Mammary epithelial cell (primary cell): ENCODE measurements at regions of chr4 and their contacts with region 1.

Region 1: DNA sequence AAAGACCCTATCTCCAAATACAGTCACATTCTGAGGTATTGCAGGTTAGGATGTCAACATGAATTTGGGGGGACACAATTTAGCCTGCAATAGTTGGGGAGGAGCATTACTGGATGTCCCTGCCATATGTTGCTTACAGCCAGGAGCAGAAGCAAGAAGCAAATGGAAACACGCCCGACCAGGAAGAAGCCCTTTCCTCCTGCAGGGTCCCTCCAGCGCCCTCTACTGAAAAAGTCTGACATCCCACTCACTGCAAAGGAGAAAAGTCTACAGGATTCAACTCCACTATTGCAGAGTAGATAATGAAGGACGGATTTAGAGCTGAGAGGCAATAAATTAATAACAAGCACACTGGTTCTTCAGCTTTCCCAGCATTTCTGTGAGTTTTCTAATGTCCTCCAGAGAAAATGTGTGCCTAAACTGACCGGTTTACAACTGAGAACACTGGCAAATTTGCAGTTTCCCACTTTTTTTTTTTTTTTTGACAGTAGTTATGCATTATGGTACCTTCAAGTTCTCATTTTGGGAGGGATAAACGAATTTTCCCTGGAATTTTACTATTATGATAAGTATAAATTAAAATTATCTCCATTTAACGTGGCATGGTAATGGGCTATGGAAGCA is 31.7 kb downstream of the COQ2 start:
- DNase-seq: peak; percentile 43
- H3K4me3 ChIP-seq: no peak overlapping the region
- H3K27ac ChIP-seq: no peak overlapping the region
- H3K4me1 ChIP-seq: peaks cover 15% of the 10 kb centered on the region
- H3K27me3 ChIP-seq: no peaks in the 10 kb centered on the region
- CTCF ChIP-seq: peak; percentile 65 to 87

Region 2: GRCh38 chr4:83040269-83040668 is 212.6 kb before region 1 on chr4:
- CTCF ChIA-PET with region 1: interaction called, 27 read pairs
- dilution Hi-C with region 1: no loop called
- in situ Hi-C with region 1: no loop called
- intact Hi-C with region 1: no loop called
- DNase-seq: no peak
- H3K4me3 ChIP-seq: no peak overlapping the region
- H3K27ac ChIP-seq: no peak overlapping the region
- H3K4me1 ChIP-seq: peaks cover 10% of the 10 kb centered on the region
- H3K27me3 ChIP-seq: no peaks in the 10 kb centered on the region
- CTCF ChIP-seq: peak in 1 of 2 donors; percentile 8

Region 3: DNA sequence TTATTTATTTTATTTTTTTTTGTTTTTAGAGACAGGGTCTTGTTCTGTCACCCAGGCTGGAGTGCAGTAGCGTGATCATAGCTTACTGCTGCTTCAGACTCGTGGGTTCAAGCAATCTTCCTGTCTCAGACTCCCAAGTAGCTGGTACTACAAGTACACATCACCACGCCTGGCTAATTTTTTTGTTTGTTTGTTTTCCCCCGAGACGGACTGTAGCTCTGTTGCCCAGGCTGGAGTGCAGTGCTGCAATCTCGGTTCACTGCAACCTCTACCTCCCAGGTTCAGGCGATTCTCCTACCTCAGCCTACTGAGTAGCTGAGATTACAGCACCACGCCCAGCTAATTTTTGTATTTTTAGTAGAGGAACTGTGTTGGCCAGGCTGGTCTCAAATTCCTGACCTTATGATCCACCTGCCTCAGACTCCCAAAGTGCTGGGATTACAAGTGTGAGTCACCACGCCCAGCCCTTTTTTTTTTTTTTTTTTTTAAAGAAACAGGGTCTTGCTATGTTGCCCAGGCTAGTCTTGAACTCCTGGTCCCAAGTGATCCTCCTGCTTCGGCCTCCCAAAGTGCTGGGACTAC is 185.7 kb before region 1 on chr4:
- CTCF ChIA-PET with region 1: no interaction called
- dilution Hi-C with region 1: no loop called
- in situ Hi-C with region 1: loop called in 1 of 2 experiments (anchors 10 kb)
- intact Hi-C with region 1: no loop called
- DNase-seq: no peak
- H3K4me3 ChIP-seq: no peak overlapping the region
- H3K27ac ChIP-seq: no peak overlapping the region
- H3K4me1 ChIP-seq: peaks cover 7% of the 10 kb centered on the region
- H3K27me3 ChIP-seq: no peaks in the 10 kb centered on the region
- CTCF ChIP-seq: no peak

Region 4: GRCh38 chr4:83074086-83074704 is 178.7 kb before region 1 on chr4:
- CTCF ChIA-PET with region 1: interaction called, 7 read pairs
- dilution Hi-C with region 1: no loop called
- in situ Hi-C with region 1: loop called in 1 of 2 experiments (anchors 10 kb)
- intact Hi-C with region 1: loop called (anchors 1 kb)
- DNase-seq: peak; percentile 61
- H3K4me3 ChIP-seq: no peak overlapping the region
- H3K27ac ChIP-seq: no peak overlapping the region
- H3K4me1 ChIP-seq: no peaks in the 10 kb centered on the region
- H3K27me3 ChIP-seq: no peaks in the 10 kb centered on the region
- CTCF ChIP-seq: peak; percentile 78 to 87

Region 5: GRCh38 chr4:83083925-83084475 is 168.9 kb before region 1 on chr4:
- CTCF ChIA-PET with region 1: no interaction called
- dilution Hi-C with region 1: loop called (anchors 10 kb)
- in situ Hi-C with region 1: loop called in 1 of 2 experiments (anchors 10 kb)
- intact Hi-C with region 1: no loop called
- DNase-seq: no peak
- H3K4me3 ChIP-seq: no peak overlapping the region
- H3K27ac ChIP-seq: no peak overlapping the region
- H3K4me1 ChIP-seq: peaks cover 13% of the 10 kb centered on the region
- H3K27me3 ChIP-seq: no peaks in the 10 kb centered on the region
- CTCF ChIP-seq: peak in 1 of 2 donors; percentile 6

Region 6: GRCh38 chr4:83110223-83110945 is 142.5 kb before region 1 on chr4:
- CTCF ChIA-PET with region 1: interaction called, 5 read pairs
- dilution Hi-C with region 1: no loop called
- in situ Hi-C with region 1: no loop called
- intact Hi-C with region 1: loop called (anchors 1 kb)
- DNase-seq: peak; percentile 72
- H3K4me3 ChIP-seq: peak overlapping the region; percentile 55 to 60 (median 57)
- H3K27ac ChIP-seq: peak overlapping the region; percentile 48
- H3K4me1 ChIP-seq: peaks cover 32% of the 10 kb centered on the region
- H3K27me3 ChIP-seq: no peaks in the 10 kb centered on the region
- CTCF ChIP-seq: peak; percentile 64 to 88

Region 7: DNA sequence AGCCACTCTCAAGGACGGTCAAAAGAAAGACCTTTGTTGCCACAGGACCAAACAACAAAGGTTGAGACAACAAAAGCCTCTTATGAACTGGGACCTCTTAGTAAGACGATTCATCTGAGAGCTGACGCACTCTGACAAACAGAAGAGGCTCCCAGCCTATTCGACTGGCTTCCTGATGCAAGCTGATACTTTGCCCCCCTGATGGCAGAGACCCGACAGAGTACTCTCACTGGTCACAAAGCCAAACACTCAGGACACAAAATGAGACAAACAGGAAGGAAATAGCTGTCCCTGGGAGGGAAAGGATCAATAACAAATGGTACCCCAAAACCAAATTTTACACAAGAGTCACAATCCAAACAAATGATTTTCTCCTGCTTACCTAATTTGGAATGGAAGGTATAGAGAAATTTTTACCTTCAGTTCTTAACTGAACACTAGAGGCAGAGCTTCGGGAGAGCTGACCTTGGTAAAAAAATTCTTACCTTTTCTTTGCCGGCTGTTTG is 63.2 kb before region 1 on chr4:
- CTCF ChIA-PET with region 1: no interaction called
- dilution Hi-C with region 1: no loop called
- in situ Hi-C with region 1: no loop called
- intact Hi-C with region 1: no loop called
- DNase-seq: no peak
- H3K4me3 ChIP-seq: no peak overlapping the region
- H3K27ac ChIP-seq: no peak overlapping the region
- H3K4me1 ChIP-seq: no peaks in the 10 kb centered on the region
- H3K27me3 ChIP-seq: no peaks in the 10 kb centered on the region
- CTCF ChIP-seq: no peak

Region 8: DNA sequence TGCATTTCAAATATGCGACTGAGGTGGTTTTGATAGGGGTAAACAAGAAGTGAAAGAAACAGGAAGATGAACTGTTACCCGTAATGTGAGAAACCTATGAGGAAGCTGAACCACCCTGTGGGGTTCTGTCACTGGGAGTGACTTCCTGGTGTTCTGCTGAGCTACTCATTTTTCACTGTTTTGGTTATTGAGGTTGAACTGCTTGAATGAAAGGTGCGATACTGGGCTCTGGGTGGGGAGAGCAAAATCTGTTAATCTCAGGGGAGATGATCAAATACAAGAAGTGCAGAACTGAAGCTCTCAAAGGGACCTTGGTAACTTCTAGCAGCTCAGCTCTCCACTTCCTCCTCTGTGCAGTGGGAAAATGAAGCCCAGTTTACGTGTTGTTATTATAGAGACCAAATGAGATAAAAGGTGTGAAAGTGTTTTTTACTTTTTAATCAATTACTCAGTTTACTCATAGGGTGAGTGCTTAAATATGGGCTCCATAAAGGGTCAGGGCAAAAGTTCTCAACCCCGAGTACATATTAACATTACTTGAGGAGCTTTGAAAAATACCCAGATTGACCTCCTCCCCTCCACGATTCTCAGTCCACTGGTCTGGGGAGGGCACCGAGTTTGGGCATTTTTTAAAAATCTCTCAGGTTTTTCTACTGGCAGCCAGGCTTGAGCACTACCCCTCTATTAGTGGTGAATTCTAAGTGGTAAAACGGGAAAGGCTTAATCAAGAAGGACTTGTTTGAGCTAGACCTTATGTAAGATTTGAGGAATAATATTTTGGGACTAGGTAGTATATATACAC is 35.0 kb before region 1 on chr4:
- CTCF ChIA-PET with region 1: interaction called, 9 read pairs
- dilution Hi-C with region 1: no loop called
- in situ Hi-C with region 1: no loop called
- intact Hi-C with region 1: loop called (anchors 2 kb)
- DNase-seq: no peak
- H3K4me3 ChIP-seq: no peak overlapping the region
- H3K27ac ChIP-seq: no peak overlapping the region
- H3K4me1 ChIP-seq: peaks cover 19% of the 10 kb centered on the region
- H3K27me3 ChIP-seq: no peaks in the 10 kb centered on the region
- CTCF ChIP-seq: no peak

Region 9: DNA sequence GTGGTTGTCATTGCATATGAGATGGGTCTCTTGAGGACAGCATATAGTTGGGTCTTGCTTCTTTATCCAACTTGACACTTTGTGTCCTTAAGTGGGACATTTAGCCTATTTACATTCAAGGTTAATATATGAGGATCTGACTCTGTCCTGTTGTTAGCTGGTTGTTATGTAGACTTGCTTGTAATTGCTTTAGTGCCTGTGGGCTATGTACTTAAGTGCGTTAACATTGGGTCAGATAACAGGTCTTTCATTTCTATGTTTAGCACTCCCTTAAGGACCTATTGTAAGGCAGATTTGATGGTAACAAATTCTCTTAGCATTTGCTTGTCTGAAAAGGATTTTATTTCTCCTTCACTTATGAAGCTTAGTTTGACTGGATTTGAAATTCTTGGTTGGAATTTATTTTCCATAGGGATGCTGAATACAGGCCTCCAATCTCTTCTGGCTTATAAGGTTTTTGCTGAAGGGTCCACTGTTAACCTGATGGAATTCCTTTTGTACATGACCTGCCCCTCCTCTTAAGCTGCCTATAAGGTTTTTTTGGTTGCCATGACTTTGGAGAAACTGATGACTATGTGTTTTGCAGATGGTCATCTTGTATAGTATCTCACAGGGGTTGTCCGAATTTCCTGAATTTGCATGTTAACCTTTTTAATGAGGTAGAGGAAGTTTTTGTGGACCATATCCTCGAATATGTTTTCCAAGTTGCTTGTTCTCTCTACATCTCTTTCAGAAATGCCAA is 1084.2 kb after region 1 on chr4:
- CTCF ChIA-PET with region 1: no interaction called
- dilution Hi-C with region 1: no loop called
- in situ Hi-C with region 1: no loop called
- intact Hi-C with region 1: no loop called
- DNase-seq: no peak
- H3K4me3 ChIP-seq: no peak overlapping the region
- H3K27ac ChIP-seq: no peak overlapping the region
- H3K4me1 ChIP-seq: no peaks in the 10 kb centered on the region
- H3K27me3 ChIP-seq: peaks cover 2% of the 10 kb centered on the region
- CTCF ChIP-seq: no peak